Astrocyte of the cerebellum (primary cell): ENCODE measurements at regions of chr19 and their contacts with region 1.

Region 1: GRCh38 chr19:49113762-49114629 is at the start of gene LIN7B:
- DNase-seq: no peak
- H3K4me3 ChIP-seq: peak within 1 kb of the TSS; percentile 66
- CTCF ChIP-seq: no peak

Region 2: GRCh38 chr19:49190781-49191180 is 76.8 kb after region 1 on chr19:
- in situ Hi-C with region 1: loop called (anchors 5 kb)
- DNase-seq: no peak
- H3K4me3 ChIP-seq: no peak overlapping the region
- CTCF ChIP-seq: no peak

Region 3: DNA sequence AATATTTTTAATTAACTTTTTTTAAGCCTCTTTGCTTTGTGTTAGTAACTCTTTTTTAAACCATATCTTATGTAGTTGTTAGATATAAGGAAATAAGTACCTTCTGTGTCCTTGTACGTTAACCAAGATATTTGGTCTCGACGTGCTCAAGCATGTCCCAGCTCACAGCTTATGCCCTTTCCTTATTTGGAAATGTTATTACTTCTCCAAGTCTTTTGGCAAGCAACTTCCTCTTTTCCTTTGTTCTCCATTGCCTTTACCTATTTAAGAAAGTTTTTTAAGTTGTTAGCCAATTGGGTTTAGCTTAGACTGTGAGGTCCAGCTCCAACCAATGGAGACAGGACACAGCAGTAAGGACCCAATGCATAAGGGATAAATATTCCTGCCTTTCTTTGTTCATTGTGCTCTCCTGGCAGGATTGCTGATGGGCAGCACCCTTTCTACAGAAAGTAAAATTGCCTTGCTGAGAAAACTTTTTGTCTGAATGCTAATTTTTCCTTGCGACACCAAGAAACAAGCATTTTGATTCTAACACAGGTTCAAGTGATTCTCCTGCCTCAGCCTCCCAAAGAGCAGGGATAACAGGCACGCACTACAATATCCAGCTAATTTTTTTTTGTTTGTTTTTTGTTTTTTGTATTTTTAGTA is 254.8 kb after region 1 on chr19:
- in situ Hi-C with region 1: no loop called
- DNase-seq: no peak
- H3K4me3 ChIP-seq: no peak overlapping the region
- CTCF ChIP-seq: no peak